GM10248 (cell line): ENCODE measurements at regions of chr7 and their contacts with region 1.

Region 1: GRCh38 chr7:101856473-101857357 is 39.3 kb downstream of the CUX1 start:
- DNase-seq: peak; percentile 90
- CTCF ChIP-seq: peak; percentile 14

Region 2: DNA sequence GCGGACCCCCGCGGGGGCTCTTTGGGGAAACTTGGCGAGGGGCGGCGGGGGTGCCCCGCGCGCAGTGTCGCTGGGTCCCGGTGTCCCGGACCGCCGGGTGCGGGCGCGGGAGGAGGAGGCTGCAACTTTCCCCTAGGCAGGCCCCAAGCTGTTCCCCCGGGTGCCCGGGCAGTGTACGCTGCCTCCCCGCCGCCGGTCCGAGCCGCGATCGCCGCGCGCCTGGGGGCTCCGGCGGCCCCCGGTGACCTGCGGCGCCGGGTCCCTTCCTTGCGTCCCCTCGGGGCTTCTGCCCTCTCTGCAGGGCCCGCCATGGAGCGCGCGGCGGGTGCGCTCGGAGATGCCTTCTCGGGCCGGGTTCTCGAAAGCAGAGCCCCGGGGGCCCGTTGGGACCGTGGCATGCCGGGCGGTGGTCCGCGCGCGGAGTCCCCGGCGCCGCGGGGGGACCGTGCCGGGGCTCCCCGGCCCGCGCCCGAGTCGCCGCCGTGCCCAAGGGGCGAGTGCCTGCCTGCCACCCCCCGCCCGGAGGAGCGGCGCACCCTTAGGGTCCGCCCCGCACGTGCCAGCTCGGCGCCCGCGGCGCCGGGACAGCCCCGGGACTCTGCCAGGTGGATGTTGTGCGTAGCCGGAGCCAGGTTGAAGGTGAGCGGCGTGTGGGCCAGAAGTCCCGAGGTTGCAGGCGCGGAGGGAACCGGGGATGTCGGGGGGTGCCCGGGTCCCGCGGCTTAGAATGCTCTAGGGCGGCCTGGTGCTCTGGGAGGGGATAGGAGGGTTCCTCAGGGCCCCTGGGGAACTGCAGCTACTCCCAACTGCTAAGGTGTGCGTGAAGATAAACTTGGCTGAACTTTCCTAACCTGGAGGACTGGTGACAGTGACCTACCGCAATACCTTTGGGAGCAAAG is 39.4 kb before region 1 on chr7 and contains the start of gene CUX1:
- CTCF ChIA-PET with region 1: interaction called, 12 read pairs
- POLR2A ChIA-PET with region 1: no interaction called
- DNase-seq: peak; percentile 36
- CTCF ChIP-seq: no peak

Region 3: GRCh38 chr7:101838837-101839483 is 17.8 kb before region 1 on chr7:
- CTCF ChIA-PET with region 1: interaction called, 12 read pairs
- POLR2A ChIA-PET with region 1: interaction called, 8 read pairs
- DNase-seq: no peak
- CTCF ChIP-seq: no peak

Region 4: GRCh38 chr7:102005933-102006332 is 149.2 kb after region 1 on chr7:
- CTCF ChIA-PET with region 1: no interaction called
- POLR2A ChIA-PET with region 1: interaction called, 10 read pairs
- DNase-seq: no peak
- CTCF ChIP-seq: no peak